ENCODE measurements at regions of chr17 and their contacts with region 1.

Region 1: GRCh38 chr17:81683584-81684237 is at the starts of genes ARL16 and HGS:
- DNase-seq: peak; percentile 99
- ATAC-seq: peak; percentile 99
- total RNA-seq, gene ARL16: 11.9 TPM
- total RNA-seq, gene HGS: 36.6 TPM

Region 2: GRCh38 chr17:81636505-81637288 is 47.0 kb before region 1 on chr17 and contains the starts of genes NPLOC4 and TSPAN10:
- intact Hi-C with region 1: loop called (anchors 5 kb)
- DNase-seq: peak; percentile 93
- ATAC-seq: peak; percentile 91
- total RNA-seq, gene NPLOC4: 82.0 TPM
- total RNA-seq, gene TSPAN10: 0.24 TPM

Region 3: DNA sequence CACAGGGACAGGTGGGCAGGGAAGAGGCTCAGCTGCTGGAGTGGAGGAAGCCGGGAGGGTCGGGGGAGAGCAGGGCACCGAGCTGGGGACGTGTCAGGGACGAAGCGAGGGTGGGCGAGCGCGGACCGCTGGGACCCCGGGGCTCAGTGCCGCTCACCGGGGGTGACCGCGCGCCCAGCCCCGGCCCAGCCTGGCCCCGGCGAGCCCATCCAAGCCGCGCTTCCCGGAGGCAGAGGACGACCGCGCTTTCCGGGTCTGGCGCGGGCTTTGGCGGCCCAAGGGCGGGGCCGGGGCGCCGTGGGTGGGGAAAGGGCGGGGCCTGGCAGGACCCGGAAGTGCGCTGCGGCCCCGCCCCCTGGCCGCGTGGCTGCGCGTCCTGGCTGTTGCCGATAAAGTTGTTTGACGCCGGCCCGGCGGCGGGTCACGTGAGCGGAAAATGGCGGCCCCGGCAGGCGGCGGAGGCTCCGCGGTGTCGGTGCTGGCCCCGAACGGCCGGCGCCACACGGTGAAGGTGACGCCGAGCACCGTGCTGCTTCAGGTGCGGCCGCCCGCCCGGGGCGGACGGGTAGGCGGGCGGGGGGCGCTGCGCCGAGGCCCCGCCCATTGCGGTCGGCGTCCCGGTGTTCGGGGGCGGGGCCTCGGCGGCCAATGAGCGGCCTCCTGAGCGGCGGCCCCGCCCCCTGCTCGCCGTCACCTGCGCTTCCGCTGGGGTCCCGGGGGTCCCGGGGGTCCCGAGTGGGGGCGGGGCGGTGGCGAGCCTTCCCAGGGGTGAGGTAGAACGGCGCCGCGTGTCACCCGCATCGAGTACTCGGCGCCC is 293.7 kb after region 1 on chr17 and contains the start of gene ASPSCR1:
- intact Hi-C with region 1: no loop called
- DNase-seq: peak; percentile 97
- ATAC-seq: peak; percentile 97
- total RNA-seq, gene ASPSCR1: 25.5 TPM

Region 4: GRCh38 chr17:82077617-82078358 is 394.1 kb after region 1 on chr17:
- intact Hi-C with region 1: no loop called
- DNase-seq: no peak
- ATAC-seq: peak; percentile 40

Measured in Right ventricle myocardium inferior (tissue), 1 donor.